ENCODE measurements at regions of chr16 and their contacts with region 1.

Region 1: GRCh38 chr16:66977341-66978113 is 10.9 kb upstream of the CES4A start:
- DNase-seq: peak; percentile 96
- ATAC-seq: peak; percentile 97
- H3K4me3 Mint-ChIP-seq: no peak overlapping the region
- H3K27ac Mint-ChIP-seq: peak overlapping the region; percentile 31
- H3K4me1 Mint-ChIP-seq: peaks cover 31% of the 10 kb centered on the region
- H3K27me3 Mint-ChIP-seq: peaks cover 3% of the 10 kb centered on the region

Region 2: GRCh38 chr16:66954097-66954659 is 23.3 kb before region 1 on chr16:
- CTCF ChIA-PET with region 1: interaction called, 8 read pairs
- POLR2A ChIA-PET with region 1: no interaction called
- intact Hi-C with region 1: loop called in 1 of 2 experiments (anchors 1 kb)
- DNase-seq: peak; percentile 87
- ATAC-seq: peak; percentile 85
- H3K4me3 Mint-ChIP-seq: no peak overlapping the region
- H3K27ac Mint-ChIP-seq: no peak overlapping the region
- H3K4me1 Mint-ChIP-seq: peaks cover 9% of the 10 kb centered on the region
- H3K27me3 Mint-ChIP-seq: peaks cover 28% of the 10 kb centered on the region

Region 3: GRCh38 chr16:67028555-67029248 is 51.2 kb after region 1 on chr16 and contains the start of gene CBFB:
- CTCF ChIA-PET with region 1: no interaction called
- POLR2A ChIA-PET with region 1: no interaction called
- intact Hi-C with region 1: no loop called
- DNase-seq: peak; percentile 95
- ATAC-seq: peak; percentile 90
- H3K4me3 Mint-ChIP-seq: peak within 1 kb of the TSS; percentile 87
- H3K27ac Mint-ChIP-seq: peak within 1 kb of the TSS; percentile 90
- H3K4me1 Mint-ChIP-seq: peaks cover 34% of the 10 kb centered on the region
- H3K27me3 Mint-ChIP-seq: no peaks in the 10 kb centered on the region
- total RNA-seq, gene CBFB: 84.6 to 90.2 TPM

Region 4: GRCh38 chr16:67415872-67416793 is 438.6 kb after region 1 on chr16 and contains the start of gene ZDHHC1:
- CTCF ChIA-PET with region 1: no interaction called
- POLR2A ChIA-PET with region 1: no interaction called
- intact Hi-C with region 1: loop called in 1 of 2 experiments (anchors 10 kb)
- DNase-seq: peak; percentile 71
- ATAC-seq: peak; percentile 93
- H3K4me3 Mint-ChIP-seq: peak within 1 kb of the TSS; percentile 64
- H3K27ac Mint-ChIP-seq: peak within 1 kb of the TSS; percentile 43
- H3K4me1 Mint-ChIP-seq: peaks cover 5% of the 10 kb centered on the region
- H3K27me3 Mint-ChIP-seq: peaks cover 25% of the 10 kb centered on the region
- total RNA-seq, gene ZDHHC1: 0.58 to 0.98 TPM

Measured in activated CD4-positive, alpha-beta T cell treated with anti-CD3 and anti-CD28 coated beads for 36 hours (primary cell).